ENCODE measurements at regions of chr14 and their contacts with region 1.

Region 1: GRCh38 chr14:91244501-91244901 is at the start of gene GPR68:
- DNase-seq: peak in 1 of 2 experiments; percentile 56
- H3K4me3 ChIP-seq: no peak within 1 kb of the TSS
- H3K27ac ChIP-seq: no peak within 1 kb of the TSS
- H3K4me1 ChIP-seq: no peaks in the 10 kb centered on the region; a peak in 3 of 7 replicates
- H3K27me3 ChIP-seq: peaks cover 0 to 2% (median 0%) of the 10 kb centered on the region in 4 experiments; a peak in 1 of 7 replicates
- CTCF ChIP-seq: no peak
- EP300 ChIP-seq: no peak
- POLR2A ChIP-seq: no peak
- RAD21 ChIP-seq: no peak
- total RNA-seq, gene GPR68: 0.22 and 0.33 TPM in 2 replicates

Region 2: GRCh38 chr14:91233936-91234790 is 10.3 kb before region 1 on chr14:
- CTCF ChIA-PET with region 1: interaction called, 6 read pairs
- POLR2A ChIA-PET with region 1: interaction called, 14 read pairs
- DNase-seq: no peak
- H3K4me3 ChIP-seq: no peak overlapping the region
- H3K27ac ChIP-seq: no peak overlapping the region
- H3K4me1 ChIP-seq: no peaks in the 10 kb centered on the region; a peak in 1 of 7 replicates
- H3K27me3 ChIP-seq: peaks cover 0 to 2% (median 0%) of the 10 kb centered on the region in 4 experiments; a peak in 1 of 7 replicates
- CTCF ChIP-seq: no peak
- EP300 ChIP-seq: no peak
- POLR2A ChIP-seq: no peak
- RAD21 ChIP-seq: no peak

Measured in H1 (cell line).